Aorta (tissue), 5 donors: ENCODE measurements at regions of chr18 and their contacts with region 1.

Region 1: GRCh38 chr18:46173393-46174341 is 69.5 kb downstream of the HAUS1 start:
- DNase-seq: peak; percentile 97 to 98
- ATAC-seq: peak; percentile 99
- H3K4me3 ChIP-seq: peak overlapping the region; percentile 64 to 83
- H3K27ac ChIP-seq: peak overlapping the region in 1 of 2 donors; percentile 43
- H3K4me1 ChIP-seq: no peaks in the 10 kb centered on the region
- H3K27me3 ChIP-seq: no peaks in the 10 kb centered on the region

Region 2: GRCh38 chr18:46134920-46135675 is 38.6 kb before region 1 on chr18:
- intact Hi-C with region 1: no loop called
- DNase-seq: no peak
- ATAC-seq: no peak
- H3K4me3 ChIP-seq: no peak overlapping the region
- H3K27ac ChIP-seq: no peak overlapping the region
- H3K4me1 ChIP-seq: no peaks in the 10 kb centered on the region
- H3K27me3 ChIP-seq: no peaks in the 10 kb centered on the region

Region 3: GRCh38 chr18:46250084-46250811 is 76.6 kb after region 1 on chr18:
- intact Hi-C with region 1: loop called in 1 of 2 experiments (anchors 5 kb)
- DNase-seq: no peak
- ATAC-seq: peak; percentile 44
- H3K4me3 ChIP-seq: no peak overlapping the region
- H3K27ac ChIP-seq: no peak overlapping the region
- H3K4me1 ChIP-seq: peaks cover 3 to 10% of the 10 kb centered on the region in 2 donors
- H3K27me3 ChIP-seq: no peaks in the 10 kb centered on the region

Region 4: GRCh38 chr18:46264235-46264893 is 90.7 kb after region 1 on chr18:
- intact Hi-C with region 1: loop called in 1 of 2 experiments (anchors 10 kb)
- DNase-seq: no peak
- ATAC-seq: no peak
- H3K4me3 ChIP-seq: no peak overlapping the region
- H3K27ac ChIP-seq: no peak overlapping the region
- H3K4me1 ChIP-seq: peaks cover 2 to 8% of the 10 kb centered on the region in 2 donors
- H3K27me3 ChIP-seq: no peaks in the 10 kb centered on the region

Region 5: GRCh38 chr18:46281185-46282176 is 107.8 kb after region 1 on chr18:
- intact Hi-C with region 1: loop called in 1 of 2 experiments (anchors 5 kb)
- DNase-seq: peak; percentile 67 to 86
- ATAC-seq: peak; percentile 85
- H3K4me3 ChIP-seq: no peak overlapping the region
- H3K27ac ChIP-seq: no peak overlapping the region
- H3K4me1 ChIP-seq: no peaks in the 10 kb centered on the region
- H3K27me3 ChIP-seq: no peaks in the 10 kb centered on the region

Region 6: DNA sequence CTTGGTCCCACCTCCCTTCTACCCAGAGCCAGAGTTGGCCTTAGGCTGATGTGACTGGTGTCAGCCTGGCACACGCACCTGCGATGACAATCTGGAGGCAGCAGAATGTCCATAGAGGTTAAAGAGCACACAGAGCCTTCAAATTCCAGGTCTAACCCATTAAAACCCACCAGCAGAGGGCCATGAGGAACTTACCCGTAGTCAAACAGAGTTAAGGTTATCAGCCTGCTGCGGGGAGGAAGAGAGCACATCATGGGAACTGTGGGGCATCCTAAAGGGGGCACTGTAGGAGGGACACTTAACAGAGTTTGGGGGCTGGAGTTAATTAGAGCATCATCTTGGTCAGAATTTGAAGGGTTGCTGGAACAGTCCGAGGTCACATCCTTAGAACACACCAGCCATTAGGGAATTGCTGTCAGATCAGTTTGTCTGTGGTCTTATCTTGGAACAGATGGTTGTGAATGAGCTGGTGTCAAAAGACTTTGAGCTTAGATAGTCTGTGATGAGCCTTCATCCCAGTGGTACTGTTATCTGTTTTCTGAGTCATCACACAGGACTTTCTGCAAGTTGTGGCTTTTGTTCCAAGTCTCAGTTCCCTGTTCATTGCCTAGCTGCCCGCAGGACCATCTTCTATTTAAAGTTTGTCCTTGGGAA is 234.8 kb after region 1 on chr18:
- intact Hi-C with region 1: loop called in 1 of 2 experiments (anchors 10 kb)
- DNase-seq: peak in 1 of 2 donors; percentile 43
- ATAC-seq: no peak
- H3K4me3 ChIP-seq: no peak overlapping the region
- H3K27ac ChIP-seq: no peak overlapping the region
- H3K4me1 ChIP-seq: peaks cover 0 to 2% of the 10 kb centered on the region in 2 donors
- H3K27me3 ChIP-seq: no peaks in the 10 kb centered on the region

Region 7: DNA sequence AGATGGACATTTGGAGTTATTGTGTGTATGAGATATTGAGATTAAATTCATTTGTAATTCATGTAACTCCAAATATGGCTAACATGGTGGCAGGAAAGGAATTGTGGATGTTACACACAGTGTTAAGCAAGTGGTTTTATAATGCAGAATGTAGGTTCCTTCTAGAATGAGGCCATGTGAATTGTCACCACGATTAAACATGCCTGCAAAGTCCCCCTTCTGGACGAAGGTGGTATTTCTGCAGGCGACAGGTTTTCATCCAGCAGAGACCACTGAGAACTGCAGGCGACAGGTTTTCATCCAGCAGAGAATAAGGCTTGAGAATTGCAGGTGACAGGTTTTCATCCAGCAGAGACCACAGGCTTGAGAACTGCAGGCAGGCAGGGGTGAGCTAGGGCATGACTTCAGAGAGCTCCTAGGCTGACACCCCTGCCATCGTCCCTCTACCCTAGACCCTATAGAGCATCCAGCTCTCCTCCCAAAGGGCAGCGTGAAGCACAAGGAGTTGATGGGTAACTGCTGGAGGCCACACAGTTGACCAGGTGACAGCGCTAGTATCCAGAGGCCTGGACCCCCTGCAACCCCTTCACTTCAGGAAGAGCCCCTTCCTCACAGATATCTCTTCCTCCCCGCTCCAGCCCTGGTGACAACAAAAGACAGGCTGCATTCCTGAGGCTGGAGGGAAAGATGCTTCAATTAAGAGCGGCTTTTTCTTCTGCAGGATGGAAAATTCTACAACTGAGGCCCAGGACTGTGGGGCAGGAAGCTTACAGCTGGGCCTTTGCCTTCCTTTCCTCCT is 307.6 kb after region 1 on chr18:
- intact Hi-C with region 1: loop called in 1 of 2 experiments (anchors 5 kb)
- DNase-seq: no peak
- ATAC-seq: peak; percentile 17
- H3K4me3 ChIP-seq: no peak overlapping the region
- H3K27ac ChIP-seq: no peak overlapping the region
- H3K4me1 ChIP-seq: no peaks in the 10 kb centered on the region
- H3K27me3 ChIP-seq: no peaks in the 10 kb centered on the region

Region 8: GRCh38 chr18:46660955-46661749 is 487.5 kb after region 1 on chr18:
- intact Hi-C with region 1: loop called (anchors 5 kb)
- DNase-seq: peak in 1 of 2 donors; percentile 55
- ATAC-seq: no peak
- H3K4me3 ChIP-seq: no peak overlapping the region
- H3K27ac ChIP-seq: no peak overlapping the region
- H3K4me1 ChIP-seq: no peaks in the 10 kb centered on the region
- H3K27me3 ChIP-seq: no peaks in the 10 kb centered on the region